Activated T-helper 2 cell treated with anti-CD3 and anti-CD28 coated beads, Interferon-gamma antibody, Interleukin-2, Interleukin-4, amounts not matched to agents 10 μg/mL and 5 μg/mL and 100 μg/mL, durations not matched to agents 14 hours and 24 hours and 36 hours (primary cell): ENCODE measurements at regions of chr1 and their contacts with region 1.

Region 1: DNA sequence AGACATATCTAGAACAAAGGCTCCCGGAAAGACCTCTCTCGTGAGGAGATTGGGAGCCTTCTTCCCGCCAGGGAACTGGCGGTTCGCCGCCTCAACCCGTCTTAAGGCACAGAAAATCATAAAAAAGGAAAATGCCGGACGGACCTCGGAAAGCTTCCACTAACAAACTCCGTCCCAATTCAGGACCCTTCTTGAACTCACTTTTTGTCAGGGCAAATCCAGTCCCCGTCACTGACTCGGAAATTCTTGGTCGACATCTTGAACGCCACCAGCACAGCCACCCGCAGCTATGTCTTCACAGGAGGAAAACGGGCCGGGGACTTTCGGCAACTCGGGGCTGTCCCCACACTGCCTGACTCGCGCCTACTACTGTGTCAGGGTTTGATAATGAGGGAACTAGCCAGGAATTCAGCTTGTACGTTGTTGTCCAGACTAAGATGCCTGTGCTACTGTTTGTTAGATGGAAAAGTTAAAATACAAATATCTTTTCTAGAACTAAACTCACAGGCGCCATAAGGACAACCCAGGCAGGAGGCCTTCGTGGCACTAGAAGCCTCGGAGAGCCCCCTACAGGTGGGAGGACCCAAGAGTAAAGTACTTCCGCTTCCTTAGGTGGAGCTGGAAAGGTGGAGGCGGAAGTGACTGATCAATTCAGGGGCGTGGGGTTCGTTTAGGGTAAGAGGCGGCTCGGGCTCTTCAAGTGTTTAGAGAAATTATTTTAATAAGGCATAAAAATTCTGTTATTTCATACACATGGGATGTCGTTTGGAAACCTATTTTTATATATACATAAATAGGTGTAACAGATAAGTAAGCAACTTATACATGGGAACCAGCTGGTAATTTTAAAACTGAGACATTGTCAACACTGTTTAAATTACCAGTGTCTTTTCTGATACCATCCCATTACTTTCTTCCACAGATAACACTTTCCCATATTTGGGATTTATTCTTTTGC is at the start of gene ZRANB2:
- DNase-seq: peak; percentile 85
- H3K4me3 Mint-ChIP-seq: peak within 1 kb of the TSS; percentile 98
- H3K27ac Mint-ChIP-seq: peak within 1 kb of the TSS; percentile 100
- H3K4me1 Mint-ChIP-seq: peaks cover 16% of the 10 kb centered on the region
- H3K27me3 Mint-ChIP-seq: peaks cover 14% of the 10 kb centered on the region
- total RNA-seq, gene ZRANB2: 131 and 135 TPM in 2 replicates

Region 2: GRCh38 chr1:70221241-70222121 is 859.5 kb before region 1 on chr1 and contains the start of gene SRSF11:
- intact Hi-C with region 1: loop called (anchors 1 kb)
- DNase-seq: peak; percentile 95
- H3K4me3 Mint-ChIP-seq: peak within 1 kb of the TSS; percentile 93
- H3K27ac Mint-ChIP-seq: peak within 1 kb of the TSS; percentile 97
- H3K4me1 Mint-ChIP-seq: peaks cover 35% of the 10 kb centered on the region
- H3K27me3 Mint-ChIP-seq: no peaks in the 10 kb centered on the region
- total RNA-seq, gene SRSF11: 194 and 195 TPM in 2 replicates

Region 3: GRCh38 chr1:71068325-71069240 is 12.4 kb before region 1 on chr1:
- intact Hi-C with region 1: loop called (anchors 2 kb)
- DNase-seq: no peak
- H3K4me3 Mint-ChIP-seq: peak overlapping the region; percentile 51
- H3K27ac Mint-ChIP-seq: peak overlapping the region; percentile 58
- H3K4me1 Mint-ChIP-seq: peaks cover 32% of the 10 kb centered on the region
- H3K27me3 Mint-ChIP-seq: no peaks in the 10 kb centered on the region